ENCODE measurements at regions of chr2 and their contacts with region 1.

Region 1: DNA sequence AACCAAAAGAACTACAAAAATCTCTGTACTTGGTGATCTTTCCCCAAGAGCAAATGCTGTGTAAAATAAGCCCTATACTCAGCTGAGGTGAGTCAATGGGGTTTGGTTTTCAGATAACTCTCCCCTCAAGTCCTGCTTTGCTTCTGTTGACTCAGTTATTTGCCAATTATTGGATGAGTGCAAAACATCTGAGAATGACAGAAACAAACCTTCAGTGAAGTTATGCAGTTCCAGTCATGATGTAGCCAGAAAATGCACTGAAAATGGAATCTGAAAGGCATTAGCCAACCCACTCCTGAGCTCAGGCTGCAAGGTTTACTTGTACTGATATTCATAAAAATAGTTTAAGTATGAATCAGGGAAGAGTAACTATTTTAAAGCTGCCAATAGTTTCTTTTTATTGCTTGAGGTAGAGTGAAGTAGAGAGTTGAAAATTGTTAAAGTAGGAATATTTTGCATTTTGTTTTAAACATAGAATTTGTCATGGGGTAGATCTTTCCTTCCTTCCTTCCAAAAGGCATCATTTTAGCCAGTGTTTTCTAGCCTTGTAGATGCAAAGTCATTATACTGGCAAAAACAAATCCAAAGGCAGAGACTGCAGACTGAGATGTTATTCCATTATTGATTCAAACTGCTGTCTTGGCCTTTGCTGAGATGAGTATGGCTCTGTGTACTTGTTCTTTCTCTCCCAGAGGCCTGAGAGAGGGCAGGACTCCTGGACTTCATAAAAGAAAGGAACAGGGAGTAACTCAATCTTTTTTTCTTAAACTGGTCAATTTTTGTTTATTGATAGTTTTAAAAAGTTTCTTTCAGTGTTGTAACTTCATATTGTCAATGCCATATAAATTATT is 215.3 kb downstream of the RND3 start:
- DNase-seq: no peak
- H3K4me3 ChIP-seq: no peak overlapping the region
- H3K27ac ChIP-seq: peak overlapping the region in 1 of 2 donors; percentile 26
- H3K4me1 ChIP-seq: no peaks in the 10 kb centered on the region
- H3K27me3 ChIP-seq: no peaks in the 10 kb centered on the region
- CTCF ChIP-seq: no peak

Region 2: DNA sequence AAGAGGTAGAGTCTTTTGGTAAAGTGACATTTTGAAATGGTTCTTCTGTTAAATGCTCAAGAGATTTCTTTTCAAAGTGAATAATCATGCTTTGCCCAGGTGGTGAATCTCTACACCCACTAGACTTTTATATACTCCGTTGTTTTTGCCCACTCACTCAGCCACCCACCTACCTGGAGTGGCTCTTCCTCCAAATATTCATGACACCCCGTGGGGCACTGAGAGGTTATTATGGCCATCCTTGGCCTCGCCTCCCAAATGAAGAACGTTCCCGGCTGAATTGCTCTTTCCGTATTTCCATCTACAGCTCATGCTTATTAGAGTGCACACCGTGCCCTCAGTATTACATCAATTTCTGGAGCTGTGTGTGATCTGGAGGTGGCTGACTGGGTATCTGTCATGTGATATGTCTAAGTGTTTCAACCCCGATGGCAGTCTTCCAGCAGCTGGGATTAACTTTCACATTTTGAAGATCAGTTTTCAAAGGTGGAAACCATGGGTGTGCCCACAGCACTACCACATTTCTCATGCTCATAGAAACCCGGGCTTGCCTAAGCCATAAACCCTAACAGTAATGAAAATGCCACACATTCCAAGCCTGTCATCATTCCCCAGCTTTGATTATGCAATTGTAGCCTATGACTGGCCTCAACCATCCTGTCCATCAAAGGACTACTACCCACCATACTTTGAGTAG is 278.0 kb before region 1 on chr2:
- intact Hi-C with region 1: loop called (anchors 10 kb)
- DNase-seq: no peak
- H3K4me3 ChIP-seq: no peak overlapping the region
- H3K27ac ChIP-seq: peak overlapping the region; percentile 71 to 81
- H3K4me1 ChIP-seq: peaks cover 0 to 26% of the 10 kb centered on the region in 2 donors
- H3K27me3 ChIP-seq: no peaks in the 10 kb centered on the region
- CTCF ChIP-seq: no peak

Region 3: DNA sequence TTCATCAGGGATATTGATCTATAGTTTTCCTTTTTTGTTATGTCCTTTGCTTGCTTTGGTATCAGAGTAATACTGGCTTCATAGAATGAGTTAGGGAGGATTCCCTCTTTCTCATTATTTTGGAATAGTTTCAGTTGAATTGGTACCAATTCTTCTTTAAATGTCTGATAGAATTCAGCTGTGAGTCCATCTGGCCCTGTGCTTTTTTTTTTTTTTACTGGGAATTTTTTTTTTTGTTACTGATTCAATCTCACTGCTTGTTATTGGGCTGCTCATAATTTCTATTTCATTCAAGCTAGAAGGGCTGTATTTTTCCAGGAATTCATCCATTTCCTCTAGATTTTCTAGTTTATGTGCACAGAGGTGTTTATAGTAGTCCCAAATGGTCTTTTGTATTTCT is 111.4 kb after region 1 on chr2:
- intact Hi-C with region 1: no loop called
- DNase-seq: no peak
- H3K4me3 ChIP-seq: no peak overlapping the region
- H3K27ac ChIP-seq: no peak overlapping the region
- H3K4me1 ChIP-seq: no peaks in the 10 kb centered on the region
- H3K27me3 ChIP-seq: no peaks in the 10 kb centered on the region
- CTCF ChIP-seq: no peak

Measured in ascending aorta (tissue), 2 donors.